A549 (cell line): ENCODE measurements at regions of chr11 and their contacts with region 1.

Region 1: GRCh38 chr11:72471005-72471898 is 36.9 kb upstream of the CLPB start:
- DNase-seq: peak; percentile 66 to 72
- ATAC-seq: peak; percentile 95 to 98
- H3K4me3 ChIP-seq: no peak overlapping the region
- H3K27ac ChIP-seq: no peak overlapping the region
- H3K4me1 ChIP-seq: no peaks in the 10 kb centered on the region
- CTCF ChIP-seq: peak; percentile 83
- EP300 ChIP-seq: no peak
- POLR2A ChIP-seq: no peak
- RAD21 ChIP-seq: peak; percentile 76 to 80

Region 2: DNA sequence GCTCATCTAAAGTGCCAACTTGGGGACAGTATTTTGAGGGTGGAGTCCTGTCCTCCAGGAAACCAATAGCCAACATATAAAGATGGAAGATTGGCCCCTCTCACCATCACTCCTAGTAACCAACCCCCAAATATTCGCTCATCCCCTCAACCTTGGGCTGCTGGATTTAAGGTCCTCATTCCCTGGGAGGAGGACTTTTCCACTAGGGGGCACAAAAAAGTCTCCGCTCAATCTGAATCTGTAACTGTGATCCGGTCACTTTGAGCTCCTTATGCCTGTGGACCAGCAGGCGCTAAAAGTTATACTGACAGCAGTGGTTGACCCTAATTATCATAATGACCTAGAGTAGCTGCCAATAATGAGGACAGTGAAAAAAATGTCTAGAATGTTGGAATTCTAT is 16.5 kb before region 1 on chr11:
- CTCF ChIA-PET with region 1: interaction called, 44 read pairs
- POLR2A ChIA-PET with region 1: no interaction called
- DNase-seq: no peak
- ATAC-seq: peak; percentile 67 to 76; a peak in 4 of 6 replicates
- H3K4me3 ChIP-seq: no peak overlapping the region
- H3K27ac ChIP-seq: no peak overlapping the region
- H3K4me1 ChIP-seq: no peaks in the 10 kb centered on the region
- CTCF ChIP-seq: peak; percentile 34
- EP300 ChIP-seq: no peak
- POLR2A ChIP-seq: no peak
- RAD21 ChIP-seq: peak in 1 of 2 experiments; percentile 14; a peak in 1 of 5 replicates

Region 3: GRCh38 chr11:72483412-72484186 is 12.3 kb after region 1 on chr11:
- CTCF ChIA-PET with region 1: interaction called, 56 read pairs
- POLR2A ChIA-PET with region 1: no interaction called
- DNase-seq: peak in 1 of 2 experiments; percentile 10
- ATAC-seq: no peak
- H3K4me3 ChIP-seq: no peak overlapping the region
- H3K27ac ChIP-seq: no peak overlapping the region
- H3K4me1 ChIP-seq: 0 out of 3 replicates have a peak, but pooled peaks cover 2% of the 10 kb centered on the region
- CTCF ChIP-seq: no peak
- EP300 ChIP-seq: no peak
- POLR2A ChIP-seq: no peak
- RAD21 ChIP-seq: no peak

Region 4: DNA sequence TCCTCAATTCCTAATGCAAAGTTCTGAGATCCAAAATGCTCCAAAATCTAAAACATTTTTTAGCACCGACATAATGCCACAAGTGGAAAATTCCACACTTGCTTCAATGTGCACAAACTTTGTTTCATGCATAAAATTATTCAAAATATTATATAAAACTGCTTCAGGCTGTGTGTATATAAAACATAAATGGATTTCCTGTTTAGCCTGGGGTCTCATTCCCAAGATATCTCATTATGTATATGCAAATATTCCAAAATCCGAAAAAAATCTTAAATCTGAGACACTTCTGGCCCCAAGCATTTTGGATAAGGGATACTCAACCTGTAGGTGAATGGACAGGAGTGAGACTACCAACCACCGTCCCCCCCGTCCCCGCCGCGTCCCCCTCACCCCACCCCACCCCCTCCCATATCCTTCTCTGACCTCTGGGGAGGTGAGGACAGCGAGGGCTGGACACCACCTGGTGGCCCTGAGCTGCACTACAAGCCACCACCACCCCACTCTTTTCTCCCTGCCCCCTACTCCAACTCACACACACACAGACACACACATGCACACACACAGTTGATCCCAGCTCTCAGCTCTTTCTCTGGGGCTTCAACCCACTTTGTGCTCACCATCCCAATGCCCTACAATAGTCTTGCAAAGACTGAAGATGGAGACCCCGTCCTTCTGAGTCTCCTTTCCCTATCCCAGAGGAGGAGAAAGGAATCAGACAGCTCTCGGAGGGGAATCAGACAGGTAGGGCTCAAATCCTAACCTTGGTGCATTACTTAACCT is 102.0 kb after region 1 on chr11:
- CTCF ChIA-PET with region 1: interaction called, 32 read pairs
- POLR2A ChIA-PET with region 1: interaction called, 3 read pairs
- DNase-seq: peak; percentile 47 to 67
- ATAC-seq: peak; percentile 85 to 94
- H3K4me3 ChIP-seq: no peak overlapping the region
- H3K27ac ChIP-seq: no peak overlapping the region
- H3K4me1 ChIP-seq: peaks cover 3% of the 10 kb centered on the region; the same call in 1 of the 3 replicates
- CTCF ChIP-seq: peak; percentile 59
- EP300 ChIP-seq: no peak
- POLR2A ChIP-seq: no peak
- RAD21 ChIP-seq: peak; percentile 68 to 74

Region 5: DNA sequence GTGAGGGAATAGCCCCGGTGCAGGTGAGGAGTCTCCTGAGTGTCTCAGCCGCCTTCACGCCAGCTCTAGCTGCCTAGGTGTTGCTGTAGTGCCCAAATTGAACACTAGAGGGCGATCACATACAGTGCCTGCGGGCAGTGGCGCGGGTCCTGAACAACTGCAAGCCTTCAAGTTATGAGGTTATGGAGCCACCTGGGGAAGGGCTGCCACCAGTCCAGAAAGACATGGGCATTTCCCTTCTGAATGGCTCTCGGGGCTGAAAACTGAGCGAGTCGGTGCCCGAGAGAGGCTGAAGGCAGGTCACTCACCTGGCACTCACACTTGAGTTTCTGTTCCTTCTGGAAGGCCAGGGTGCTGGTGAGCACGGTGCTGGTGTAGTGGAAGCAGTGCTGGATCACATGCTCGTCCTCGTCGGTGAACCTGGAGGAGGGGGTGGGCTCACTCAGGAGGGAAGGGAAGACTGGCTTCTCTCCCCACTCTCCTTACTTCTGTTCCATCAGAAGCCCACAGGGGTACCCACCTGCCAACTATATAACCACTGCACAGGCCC is 114.6 kb after region 1 on chr11:
- CTCF ChIA-PET with region 1: interaction called, 46 read pairs
- POLR2A ChIA-PET with region 1: no interaction called
- DNase-seq: peak; percentile 64 to 77
- ATAC-seq: peak; percentile 27 to 75; a peak in 3 of 6 replicates
- H3K4me3 ChIP-seq: no peak overlapping the region
- H3K27ac ChIP-seq: no peak overlapping the region
- H3K4me1 ChIP-seq: 0 out of 3 replicates have a peak, but pooled peaks cover 6% of the 10 kb centered on the region
- CTCF ChIP-seq: peak; percentile 87
- EP300 ChIP-seq: no peak
- POLR2A ChIP-seq: no peak
- RAD21 ChIP-seq: peak; percentile 69 to 72

Region 6: DNA sequence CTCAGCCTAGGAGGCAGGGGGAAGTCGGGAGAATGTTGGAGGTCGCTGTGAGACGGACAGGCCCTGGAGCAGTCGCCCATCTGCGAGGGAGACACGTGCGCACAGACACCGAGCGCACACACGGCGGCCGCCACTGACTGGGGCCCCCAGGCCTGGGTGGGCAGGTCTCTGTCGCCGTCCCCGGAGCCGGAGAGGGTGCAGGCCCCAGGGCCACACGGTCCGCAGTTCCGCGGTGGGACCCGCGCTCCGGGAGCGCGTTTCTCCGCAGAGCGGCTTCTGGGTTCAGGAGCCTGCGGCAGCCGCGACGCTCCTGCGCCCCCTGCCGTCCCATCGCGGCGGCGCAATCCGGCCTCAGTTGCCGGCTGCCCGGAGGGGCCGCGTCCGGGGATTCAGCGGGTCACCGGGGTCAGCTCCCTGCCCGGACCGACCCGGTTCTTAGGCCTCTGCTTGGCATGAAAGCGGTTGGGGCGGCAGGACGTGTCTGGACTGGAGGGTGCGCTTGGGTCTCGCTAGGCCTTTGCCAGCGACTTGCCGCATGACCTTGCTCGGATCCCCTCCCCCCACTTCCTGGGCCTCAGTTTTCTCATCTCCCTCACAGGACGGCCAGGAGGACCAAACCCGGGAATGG is 171.7 kb after region 1 on chr11:
- CTCF ChIA-PET with region 1: interaction called, 13 read pairs
- POLR2A ChIA-PET with region 1: no interaction called
- DNase-seq: peak; percentile 65 to 80
- ATAC-seq: peak; percentile 59 to 86
- H3K4me3 ChIP-seq: peak overlapping the region; percentile 68
- H3K27ac ChIP-seq: peak overlapping the region; percentile 58 to 91
- H3K4me1 ChIP-seq: peaks cover 16% of the 10 kb centered on the region
- CTCF ChIP-seq: peak; percentile 96
- EP300 ChIP-seq: no peak
- POLR2A ChIP-seq: no peak
- RAD21 ChIP-seq: peak; percentile 64 to 88